Activated CD4-positive, alpha-beta T cell treated with anti-CD3 and anti-CD28 coated beads, Interleukin-2, amount 10 ng/mL, durations not matched to agents 24 days and 14 days (primary cell): ENCODE measurements at regions of chr9 and their contacts with region 1.

Region 1: GRCh38 chr9:21812946-21813568 is 10.6 kb downstream of the MTAP start:
- DNase-seq: peak; percentile 90
- H3K4me3 Mint-ChIP-seq: no peak overlapping the region
- H3K27ac Mint-ChIP-seq: no peak overlapping the region
- H3K4me1 Mint-ChIP-seq: peaks cover 25% of the 10 kb centered on the region
- H3K27me3 Mint-ChIP-seq: no peaks in the 10 kb centered on the region

Region 2: GRCh38 chr9:21709464-21710058 is 103.5 kb before region 1 on chr9:
- intact Hi-C with region 1: no loop called
- DNase-seq: peak; percentile 89
- H3K4me3 Mint-ChIP-seq: no peak overlapping the region
- H3K27ac Mint-ChIP-seq: no peak overlapping the region
- H3K4me1 Mint-ChIP-seq: peaks cover 13% of the 10 kb centered on the region
- H3K27me3 Mint-ChIP-seq: peaks cover 35% of the 10 kb centered on the region

Region 3: GRCh38 chr9:21831961-21832509 is 19.0 kb after region 1 on chr9:
- intact Hi-C with region 1: loop called (anchors 1 kb)
- DNase-seq: peak; percentile 84
- H3K4me3 Mint-ChIP-seq: peak overlapping the region; percentile 15
- H3K27ac Mint-ChIP-seq: peak overlapping the region; percentile 29
- H3K4me1 Mint-ChIP-seq: peaks cover 57% of the 10 kb centered on the region
- H3K27me3 Mint-ChIP-seq: no peaks in the 10 kb centered on the region

Region 4: DNA sequence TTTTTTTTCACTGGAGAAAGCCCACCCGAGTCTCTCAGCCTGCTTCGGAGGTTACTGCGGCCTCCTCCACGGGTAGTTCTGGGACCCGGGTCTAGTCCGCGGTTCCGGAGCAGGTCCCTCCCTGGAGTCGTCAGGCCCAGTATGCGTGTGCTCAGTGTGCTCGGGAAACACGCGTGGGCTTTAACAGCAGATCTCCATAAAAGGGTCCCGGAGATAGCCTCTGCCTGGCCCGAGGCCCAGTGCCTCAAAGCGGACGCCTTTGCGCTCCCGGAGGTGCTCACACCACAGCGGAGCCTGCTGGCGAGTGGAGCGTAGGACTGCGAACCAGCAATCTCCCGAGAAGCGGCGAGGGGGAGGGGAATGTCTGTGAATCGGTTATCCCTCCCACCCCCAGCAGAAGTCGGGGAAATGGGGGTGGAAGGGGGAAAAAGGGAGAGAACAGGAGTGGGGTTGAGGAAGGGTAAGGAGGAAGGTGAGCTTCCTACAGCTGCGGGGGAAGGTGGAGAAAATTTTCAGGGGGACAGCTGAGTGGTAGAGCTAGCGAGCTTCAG is 152.4 kb after region 1 on chr9:
- intact Hi-C with region 1: loop called (anchors 1 kb)
- DNase-seq: peak; percentile 85
- H3K4me3 Mint-ChIP-seq: peak overlapping the region; percentile 70
- H3K27ac Mint-ChIP-seq: peak overlapping the region; percentile 72
- H3K4me1 Mint-ChIP-seq: peaks cover 31% of the 10 kb centered on the region
- H3K27me3 Mint-ChIP-seq: peaks cover 85% of the 10 kb centered on the region

Region 5: DNA sequence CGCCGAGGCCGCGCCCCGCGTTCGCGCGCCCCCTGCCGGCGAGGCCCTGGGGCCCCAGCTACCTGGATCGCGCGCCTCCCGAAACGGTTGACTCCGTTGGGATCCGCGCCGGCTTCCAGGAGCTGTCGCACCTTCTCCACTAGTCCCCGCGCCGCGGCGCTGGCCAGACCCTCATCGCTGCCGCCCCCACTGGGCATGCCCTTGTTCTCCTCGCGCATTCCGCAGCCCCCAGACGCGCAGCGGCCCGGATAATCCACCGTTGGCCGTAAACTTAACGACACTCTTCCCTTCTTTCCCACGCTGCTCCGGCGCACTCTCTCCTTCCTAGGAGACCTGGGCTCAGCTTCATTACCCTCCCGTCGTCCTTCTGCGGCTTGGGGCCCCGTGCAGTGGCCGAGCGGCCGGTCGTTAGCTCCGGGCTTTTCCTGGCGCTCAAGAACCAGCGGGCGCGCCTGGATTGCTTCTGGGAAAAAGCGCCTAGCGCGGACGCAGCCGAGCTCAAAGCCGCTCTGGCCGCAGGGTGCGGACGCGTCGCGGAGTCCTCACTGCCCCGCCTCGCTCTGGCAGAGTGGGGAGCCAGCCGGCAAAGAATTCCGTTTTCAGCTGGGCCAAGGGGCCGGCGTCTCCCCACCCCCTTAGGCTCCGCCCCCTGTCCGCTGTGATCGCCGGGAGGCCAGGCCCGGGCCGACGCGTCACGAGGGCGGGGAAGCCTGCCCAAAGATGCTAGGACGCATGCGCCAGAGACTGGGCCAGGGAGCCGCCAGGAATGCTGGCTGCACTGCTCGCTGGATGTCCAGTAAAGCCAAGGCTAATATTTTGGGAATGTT is 195.9 kb after region 1 on chr9 and contains the start of gene CDKN2B:
- intact Hi-C with region 1: loop called (anchors 1 kb)
- DNase-seq: peak; percentile 94
- H3K4me3 Mint-ChIP-seq: peak within 1 kb of the TSS; percentile 82
- H3K27ac Mint-ChIP-seq: no peak within 1 kb of the TSS
- H3K4me1 Mint-ChIP-seq: peaks cover 24% of the 10 kb centered on the region
- H3K27me3 Mint-ChIP-seq: peaks cover 73% of the 10 kb centered on the region
- total RNA-seq, gene CDKN2B: 0.21 and 0.33 TPM in 2 replicates

Region 6: GRCh38 chr9:22119537-22120158 is 306.6 kb after region 1 on chr9:
- intact Hi-C with region 1: loop called (anchors 1 kb)
- DNase-seq: peak; percentile 78
- H3K4me3 Mint-ChIP-seq: no peak overlapping the region
- H3K27ac Mint-ChIP-seq: no peak overlapping the region
- H3K4me1 Mint-ChIP-seq: peaks cover 13% of the 10 kb centered on the region
- H3K27me3 Mint-ChIP-seq: peaks cover 62% of the 10 kb centered on the region

Region 7: GRCh38 chr9:22238809-22239684 is 426.0 kb after region 1 on chr9:
- intact Hi-C with region 1: loop called (anchors 1 kb)
- DNase-seq: no peak
- H3K4me3 Mint-ChIP-seq: no peak overlapping the region
- H3K27ac Mint-ChIP-seq: no peak overlapping the region
- H3K4me1 Mint-ChIP-seq: peaks cover 36% of the 10 kb centered on the region
- H3K27me3 Mint-ChIP-seq: peaks cover 57% of the 10 kb centered on the region